Activated CD4-positive, alpha-beta T cell treated with anti-CD3 and anti-CD28 coated beads, Interleukin-2, amount 10 ng/mL, durations not matched to agents 7 days and 5 days (primary cell): ENCODE measurements at regions of chr4 and their contacts with region 1.

Region 1: DNA sequence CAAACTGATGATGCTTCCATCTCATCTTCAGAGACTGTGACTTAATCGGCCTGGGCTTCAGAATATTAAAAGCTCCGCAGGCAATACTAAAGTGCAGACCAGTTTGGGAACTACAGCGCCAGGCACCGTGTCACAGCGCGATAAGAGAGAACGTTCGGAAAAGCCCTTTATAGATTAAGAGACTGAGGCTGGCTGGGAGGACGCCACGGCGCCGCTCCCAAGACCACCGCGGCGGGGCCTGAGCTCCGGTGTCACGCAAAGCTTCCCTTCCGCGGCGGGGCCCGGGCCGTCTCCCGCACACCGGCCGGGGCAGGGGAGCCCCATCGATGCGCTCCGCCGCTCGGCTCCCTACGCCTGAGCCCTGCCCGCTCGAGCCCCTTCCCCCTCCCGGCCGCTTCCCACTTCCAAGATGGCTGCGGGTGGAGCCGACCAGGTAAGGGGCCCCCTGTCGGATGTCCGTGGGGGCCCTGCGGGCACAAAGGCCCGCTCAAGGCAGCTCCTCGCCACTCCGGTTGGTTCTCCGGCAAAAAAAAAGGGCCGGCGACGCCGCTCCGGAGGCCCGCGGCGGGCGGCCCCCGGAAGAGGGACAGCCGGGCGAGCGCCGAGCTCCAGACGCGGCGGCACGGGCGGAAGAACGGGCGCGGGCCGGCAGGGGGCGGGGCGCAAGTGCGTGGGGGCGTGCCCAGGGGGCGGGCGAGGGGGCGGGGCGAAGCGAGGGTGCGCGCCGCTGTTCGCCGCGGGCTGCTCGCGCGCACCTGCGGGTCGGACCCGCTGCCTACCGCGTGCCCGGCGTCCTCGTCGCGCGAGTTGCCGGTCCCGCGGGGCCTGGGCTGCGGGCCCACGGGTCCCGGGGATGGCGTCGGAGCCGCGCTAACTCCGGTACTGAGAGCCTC is at the start of gene TBC1D14:
- DNase-seq: peak; percentile 87
- H3K4me3 Mint-ChIP-seq: peak within 1 kb of the TSS; percentile 91
- H3K27ac Mint-ChIP-seq: peak within 1 kb of the TSS; percentile 94
- H3K4me1 Mint-ChIP-seq: peaks cover 59% of the 10 kb centered on the region
- H3K27me3 Mint-ChIP-seq: no peaks in the 10 kb centered on the region
- total RNA-seq, gene TBC1D14: 50.1 to 50.2 TPM

Region 2: GRCh38 chr4:6768539-6768905 is 140.8 kb before region 1 on chr4:
- CTCF ChIA-PET with region 1: no interaction called
- POLR2A ChIA-PET with region 1: no interaction called
- DNase-seq: no peak
- H3K4me3 Mint-ChIP-seq: no peak overlapping the region
- H3K27ac Mint-ChIP-seq: no peak overlapping the region
- H3K4me1 Mint-ChIP-seq: peaks cover 12% of the 10 kb centered on the region
- H3K27me3 Mint-ChIP-seq: peaks cover 11% of the 10 kb centered on the region

Region 3: GRCh38 chr4:6898763-6899162 is 10.6 kb before region 1 on chr4:
- CTCF ChIA-PET with region 1: interaction called, 12 read pairs
- POLR2A ChIA-PET with region 1: interaction called, 7 read pairs
- DNase-seq: no peak
- H3K4me3 Mint-ChIP-seq: no peak overlapping the region
- H3K27ac Mint-ChIP-seq: peak overlapping the region; percentile 97
- H3K4me1 Mint-ChIP-seq: peaks cover 45% of the 10 kb centered on the region
- H3K27me3 Mint-ChIP-seq: no peaks in the 10 kb centered on the region

Region 4: DNA sequence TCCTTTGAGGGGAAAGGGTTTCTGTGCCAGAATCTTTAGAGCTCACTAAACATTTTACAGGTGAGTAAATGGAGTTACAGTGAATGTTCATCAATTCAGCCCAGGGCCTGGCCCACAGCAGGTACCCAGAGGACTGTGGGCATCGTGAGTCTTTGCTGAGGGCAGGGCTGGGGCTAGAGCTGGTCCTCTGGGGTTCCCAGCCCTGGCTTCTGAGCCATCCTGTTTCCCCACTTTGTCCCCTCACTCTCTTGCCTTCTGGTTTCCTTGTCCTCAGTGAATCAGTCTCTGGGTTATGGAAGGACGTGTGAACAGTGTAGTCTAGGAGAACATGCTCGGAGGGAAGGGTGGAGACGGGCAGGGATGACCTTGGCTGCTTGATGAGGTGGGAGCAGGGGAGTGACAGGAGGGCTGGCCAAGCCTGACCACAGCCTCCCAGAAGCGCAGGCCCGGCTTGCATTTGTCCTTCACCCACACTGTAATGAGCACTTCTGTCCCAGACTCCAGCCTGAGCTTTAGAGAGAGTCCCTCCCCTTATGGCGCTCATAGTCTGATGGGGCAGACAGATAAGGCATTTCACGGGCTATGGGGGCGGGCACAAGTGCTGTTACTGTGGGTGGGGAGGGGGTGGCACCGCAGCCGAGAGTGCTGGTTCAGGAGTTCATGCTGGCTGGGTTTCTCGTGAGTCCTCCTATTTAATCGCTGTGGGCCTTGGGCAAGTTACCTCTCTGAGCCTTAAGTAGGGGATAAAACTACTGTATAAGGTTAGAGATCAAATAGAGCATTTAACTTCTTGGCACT is 17.6 kb after region 1 on chr4:
- CTCF ChIA-PET with region 1: interaction called, 15 read pairs
- POLR2A ChIA-PET with region 1: interaction called, 3 read pairs
- DNase-seq: peak; percentile 74
- H3K4me3 Mint-ChIP-seq: peak overlapping the region; percentile 66
- H3K27ac Mint-ChIP-seq: peak overlapping the region; percentile 90
- H3K4me1 Mint-ChIP-seq: peaks cover 77% of the 10 kb centered on the region
- H3K27me3 Mint-ChIP-seq: no peaks in the 10 kb centered on the region

Region 5: GRCh38 chr4:6992728-6993677 is 83.7 kb after region 1 on chr4:
- CTCF ChIA-PET with region 1: no interaction called
- POLR2A ChIA-PET with region 1: interaction called, 12 read pairs
- DNase-seq: no peak
- H3K4me3 Mint-ChIP-seq: no peak overlapping the region
- H3K27ac Mint-ChIP-seq: peak overlapping the region; percentile 83
- H3K4me1 Mint-ChIP-seq: peaks cover 63% of the 10 kb centered on the region
- H3K27me3 Mint-ChIP-seq: no peaks in the 10 kb centered on the region

Region 6: GRCh38 chr4:7067452-7068278 is 158.3 kb after region 1 on chr4 and contains the start of gene GRPEL1:
- CTCF ChIA-PET with region 1: interaction called, 4 read pairs
- POLR2A ChIA-PET with region 1: interaction called, 14 read pairs
- DNase-seq: peak; percentile 100
- H3K4me3 Mint-ChIP-seq: peak within 1 kb of the TSS; percentile 92
- H3K27ac Mint-ChIP-seq: peak within 1 kb of the TSS; percentile 94
- H3K4me1 Mint-ChIP-seq: peaks cover 49% of the 10 kb centered on the region
- H3K27me3 Mint-ChIP-seq: peaks cover 9% of the 10 kb centered on the region
- total RNA-seq, gene GRPEL1: 34.8 to 35.4 TPM